ENCODE measurements at regions of chr12 and their contacts with region 1.

Region 1: DNA sequence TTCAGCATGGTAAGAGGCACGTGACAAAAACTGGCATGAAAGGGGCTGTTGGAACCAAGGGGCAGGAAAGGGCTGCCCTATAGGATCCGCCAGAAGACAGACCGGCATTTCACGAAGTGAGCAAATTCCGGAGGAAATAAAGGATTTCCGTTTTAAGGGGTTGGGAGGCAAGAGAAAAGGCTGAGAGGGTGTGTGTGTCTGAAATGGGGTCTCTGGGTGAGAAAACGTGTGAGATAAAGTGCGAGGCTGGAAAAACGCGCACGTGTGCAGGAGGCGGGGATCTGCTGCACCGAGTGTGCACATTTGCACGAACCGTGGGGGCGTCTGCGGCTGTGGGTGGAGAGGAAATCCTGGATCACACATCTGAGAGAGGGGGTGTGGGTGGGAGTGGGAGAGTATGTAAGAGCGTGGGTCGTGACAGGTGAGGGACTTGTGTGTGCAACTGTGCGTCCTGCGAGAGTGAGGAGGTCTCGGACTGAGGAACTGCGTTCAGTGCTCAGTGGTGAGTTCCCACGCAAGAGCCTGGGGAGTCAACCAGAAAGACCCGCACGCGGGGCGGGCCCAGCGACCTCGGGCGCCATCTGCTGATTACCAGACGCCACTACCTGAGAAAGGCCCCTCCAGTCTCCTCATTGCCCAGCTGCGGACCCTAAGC is 37.0 kb upstream of the P2RX7 start:
- DNase-seq: peak; percentile 87

Region 2: GRCh38 chr12:120847814-120848213 is 247.9 kb before region 1 on chr12:
- intact Hi-C with region 1: no loop called
- DNase-seq: no peak

Region 3: GRCh38 chr12:121061831-121062230 is 33.8 kb before region 1 on chr12:
- intact Hi-C with region 1: loop called (anchors 2 kb)
- DNase-seq: no peak

Region 4: GRCh38 chr12:121202407-121203370 is 107.0 kb after region 1 on chr12:
- intact Hi-C with region 1: no loop called
- DNase-seq: no peak

Measured in cardiac septum (tissue), 1 donor.